ENCODE measurements at regions of chr3 and their contacts with region 1.

Region 1: GRCh38 chr3:152574461-152575079 is 260.4 kb upstream of the P2RY1 start:
- DNase-seq: peak; percentile 65
- ATAC-seq: peak; percentile 61
- H3K4me3 ChIP-seq: no peak overlapping the region
- H3K4me3 Mint-ChIP-seq: no peak overlapping the region
- H3K27ac ChIP-seq: no peak overlapping the region
- H3K27ac Mint-ChIP-seq: no peak overlapping the region
- H3K4me1 ChIP-seq: no peaks in the 10 kb centered on the region
- H3K4me1 Mint-ChIP-seq: peaks cover 2% of the 10 kb centered on the region
- H3K27me3 ChIP-seq: no peaks in the 10 kb centered on the region
- H3K27me3 Mint-ChIP-seq: no peaks in the 10 kb centered on the region
- CTCF ChIP-seq: peak; percentile 74

Region 2: GRCh38 chr3:152177757-152178156 is 396.8 kb before region 1 on chr3:
- CTCF ChIA-PET with region 1: interaction called, 3 read pairs
- POLR2A ChIA-PET with region 1: no interaction called
- intact Hi-C with region 1: loop called (anchors 10 kb)
- DNase-seq: no peak
- ATAC-seq: no peak
- H3K4me3 ChIP-seq: no peak overlapping the region
- H3K4me3 Mint-ChIP-seq: no peak overlapping the region
- H3K27ac ChIP-seq: no peak overlapping the region
- H3K27ac Mint-ChIP-seq: no peak overlapping the region
- H3K4me1 ChIP-seq: no peaks in the 10 kb centered on the region
- H3K4me1 Mint-ChIP-seq: peaks cover 2% of the 10 kb centered on the region
- H3K27me3 ChIP-seq: no peaks in the 10 kb centered on the region
- H3K27me3 Mint-ChIP-seq: no peaks in the 10 kb centered on the region
- CTCF ChIP-seq: no peak

Region 3: DNA sequence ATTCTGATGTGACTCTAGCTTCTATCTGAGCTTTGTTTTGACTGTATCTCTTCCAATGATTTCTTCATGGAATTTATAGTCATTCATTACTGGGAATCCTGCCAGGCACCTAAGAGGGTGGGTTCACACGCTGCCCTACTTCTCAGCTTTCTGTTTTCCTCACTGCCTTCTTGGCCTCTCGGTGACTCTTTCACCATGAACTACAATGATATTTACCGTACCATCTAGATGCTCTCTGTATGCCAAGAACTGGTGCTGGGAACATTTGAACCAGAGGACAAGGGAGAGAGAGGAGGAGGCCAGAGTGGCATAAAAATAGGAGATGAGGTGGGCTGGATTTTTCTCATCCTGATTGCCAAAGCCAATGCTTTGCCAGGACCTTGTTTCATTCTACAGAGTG is 19.6 kb before region 1 on chr3:
- CTCF ChIA-PET with region 1: no interaction called
- POLR2A ChIA-PET with region 1: no interaction called
- intact Hi-C with region 1: no loop called
- DNase-seq: no peak
- ATAC-seq: no peak
- H3K4me3 ChIP-seq: no peak overlapping the region
- H3K4me3 Mint-ChIP-seq: no peak overlapping the region
- H3K27ac ChIP-seq: no peak overlapping the region
- H3K27ac Mint-ChIP-seq: no peak overlapping the region
- H3K4me1 ChIP-seq: no peaks in the 10 kb centered on the region
- H3K4me1 Mint-ChIP-seq: no peaks in the 10 kb centered on the region
- H3K27me3 ChIP-seq: no peaks in the 10 kb centered on the region
- H3K27me3 Mint-ChIP-seq: no peaks in the 10 kb centered on the region
- CTCF ChIP-seq: no peak

Region 4: DNA sequence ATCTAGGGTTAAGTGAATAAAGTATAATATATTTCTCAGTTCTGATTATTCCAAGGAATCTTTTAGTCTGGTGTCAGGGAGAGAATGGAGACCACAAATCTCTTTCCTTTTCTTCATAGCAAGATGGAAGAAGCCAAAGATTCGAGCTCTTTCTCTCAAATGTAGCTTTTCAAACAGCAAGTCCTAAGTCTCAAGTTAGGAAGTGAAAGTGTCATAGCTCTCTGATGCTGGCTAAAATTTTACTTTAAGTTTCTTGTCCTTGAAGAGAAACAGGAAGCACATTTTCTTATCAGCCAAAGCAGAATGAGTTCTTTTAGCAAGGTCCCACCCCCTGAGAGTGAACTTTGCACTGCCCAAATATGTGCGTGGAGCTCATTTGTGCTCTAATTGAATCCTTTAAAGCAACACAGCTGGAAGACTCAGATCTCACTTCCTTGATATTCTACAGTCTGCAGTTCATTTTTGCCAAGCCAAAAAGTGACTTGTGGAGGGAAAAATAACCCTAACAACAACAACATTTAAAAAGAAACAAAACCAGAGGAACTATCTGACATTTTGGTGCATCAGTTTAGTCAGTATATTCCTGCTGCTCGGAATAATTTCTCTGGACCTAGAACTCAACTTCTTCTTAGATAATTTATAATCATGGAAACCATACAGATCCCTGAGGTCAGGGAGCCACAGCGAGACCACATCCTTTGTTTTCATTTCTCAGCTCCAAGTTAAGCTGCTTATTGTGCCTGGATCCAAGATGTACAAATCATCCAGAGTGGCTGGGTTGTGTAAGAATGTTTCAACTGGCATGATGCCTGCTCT is 21.6 kb after region 1 on chr3:
- CTCF ChIA-PET with region 1: interaction called, 13 read pairs
- POLR2A ChIA-PET with region 1: no interaction called
- intact Hi-C with region 1: no loop called
- DNase-seq: peak; percentile 79
- ATAC-seq: peak; percentile 96
- H3K4me3 ChIP-seq: peak overlapping the region in 3 of 5 experiments; percentile 5 to 52 (median 25)
- H3K4me3 Mint-ChIP-seq: peak overlapping the region; percentile 73
- H3K27ac ChIP-seq: peak overlapping the region; percentile 67 to 79
- H3K27ac Mint-ChIP-seq: peak overlapping the region; percentile 99
- H3K4me1 ChIP-seq: peaks cover 15 to 23% of the 10 kb centered on the region in 2 donors
- H3K4me1 Mint-ChIP-seq: peaks cover 28% of the 10 kb centered on the region
- H3K27me3 ChIP-seq: no peaks in the 10 kb centered on the region
- H3K27me3 Mint-ChIP-seq: no peaks in the 10 kb centered on the region
- CTCF ChIP-seq: no peak